Prostate gland (tissue), 2 donors: ENCODE measurements at regions of chr3 and their contacts with region 1.

Region 1: DNA sequence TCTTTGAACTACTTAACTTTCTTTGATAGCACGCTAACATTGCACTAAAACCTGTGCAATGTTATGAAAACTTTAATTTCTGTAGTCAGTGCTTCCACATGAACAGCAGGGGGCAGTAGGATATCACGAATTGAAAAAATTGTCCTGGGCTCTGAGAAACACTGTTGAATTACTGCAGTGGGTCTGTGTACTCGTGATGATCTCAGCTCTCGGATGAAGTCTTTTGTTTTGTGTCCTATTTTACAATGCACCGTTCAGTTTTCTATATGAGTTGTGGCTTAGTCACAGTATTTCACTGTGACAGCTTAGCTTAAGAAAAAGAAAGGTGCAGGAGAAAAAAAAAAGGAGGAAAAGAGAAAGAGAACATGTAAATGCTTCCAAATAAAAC is 141.3 kb upstream of the CCDC54 start:
- DNase-seq: peak; percentile 69
- H3K4me3 ChIP-seq: peak overlapping the region; percentile 29 to 34
- H3K27ac ChIP-seq: peak overlapping the region; percentile 3 to 59
- H3K4me1 ChIP-seq: no peaks in the 10 kb centered on the region
- H3K27me3 ChIP-seq: no peaks in the 10 kb centered on the region
- CTCF ChIP-seq: peak; percentile 76 to 97 (median 93)
- POLR2A ChIP-seq: no peak

Region 2: GRCh38 chr3:107429320-107430181 is 193.6 kb after region 1 on chr3:
- intact Hi-C with region 1: loop called (anchors 5 kb)
- DNase-seq: peak; percentile 69
- H3K4me3 ChIP-seq: peak overlapping the region; percentile 64 to 68
- H3K27ac ChIP-seq: peak overlapping the region; percentile 97 to 98
- H3K4me1 ChIP-seq: no peaks in the 10 kb centered on the region
- H3K27me3 ChIP-seq: no peaks in the 10 kb centered on the region
- CTCF ChIP-seq: peak; percentile 64 to 85 (median 82)
- POLR2A ChIP-seq: no peak

Region 3: GRCh38 chr3:107522510-107523288 is 286.8 kb after region 1 on chr3 and contains the start of gene BBX:
- intact Hi-C with region 1: loop called (anchors 5 kb)
- DNase-seq: peak; percentile 96
- H3K4me3 ChIP-seq: peak within 1 kb of the TSS; percentile 84 to 95
- H3K27ac ChIP-seq: peak within 1 kb of the TSS; percentile 96 to 98
- H3K4me1 ChIP-seq: peaks cover 5% of the 10 kb centered on the region
- H3K27me3 ChIP-seq: no peaks in the 10 kb centered on the region
- CTCF ChIP-seq: peak in 2 of 4 experiments; percentile 7 to 13
- POLR2A ChIP-seq: peak; percentile 95
- total RNA-seq, gene BBX: 94.7 to 226 TPM

Region 4: GRCh38 chr3:107562969-107563529 is 327.1 kb after region 1 on chr3:
- intact Hi-C with region 1: no loop called
- DNase-seq: no peak
- H3K4me3 ChIP-seq: no peak overlapping the region
- H3K27ac ChIP-seq: no peak overlapping the region
- H3K4me1 ChIP-seq: no peaks in the 10 kb centered on the region
- H3K27me3 ChIP-seq: no peaks in the 10 kb centered on the region
- CTCF ChIP-seq: no peak
- POLR2A ChIP-seq: no peak

Region 5: DNA sequence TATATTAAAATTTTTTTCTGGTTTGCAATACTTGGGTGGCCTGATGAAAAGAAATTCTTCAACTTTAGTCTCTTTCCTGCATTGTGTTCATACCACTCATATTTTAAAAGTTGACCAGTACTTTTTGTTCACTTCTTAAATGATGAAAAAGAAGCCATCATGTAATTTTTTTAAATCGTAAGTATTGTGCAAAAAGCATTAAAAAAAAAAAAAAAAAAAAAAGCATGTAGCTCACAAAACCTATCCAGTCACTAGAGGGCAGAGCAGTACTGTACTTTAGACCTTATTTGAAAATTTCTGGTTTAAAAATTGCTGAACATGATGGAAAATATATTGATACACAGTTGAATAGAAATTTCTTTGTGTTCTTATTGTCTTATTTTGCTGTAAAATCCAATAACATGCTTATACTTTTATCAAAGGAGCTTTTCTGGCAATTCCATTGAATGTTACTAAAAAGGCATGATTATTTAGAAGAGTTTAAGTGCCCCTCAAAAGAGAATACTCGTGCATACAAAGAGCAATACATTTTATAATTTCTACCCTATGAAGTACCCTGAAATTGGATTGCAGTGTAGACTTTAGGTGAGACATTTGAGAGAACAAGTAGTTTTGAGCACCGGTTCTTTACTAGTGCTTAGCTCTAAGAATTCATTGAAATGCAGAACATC is 424.5 kb after region 1 on chr3:
- intact Hi-C with region 1: loop called (anchors 10 kb)
- DNase-seq: no peak
- H3K4me3 ChIP-seq: no peak overlapping the region
- H3K27ac ChIP-seq: no peak overlapping the region
- H3K4me1 ChIP-seq: no peaks in the 10 kb centered on the region
- H3K27me3 ChIP-seq: no peaks in the 10 kb centered on the region
- CTCF ChIP-seq: peak in 3 of 4 experiments; percentile 28 to 53 (median 49)
- POLR2A ChIP-seq: no peak

Region 6: GRCh38 chr3:107740992-107741896 is 505.3 kb after region 1 on chr3:
- intact Hi-C with region 1: loop called (anchors 5 kb)
- DNase-seq: no peak
- H3K4me3 ChIP-seq: no peak overlapping the region
- H3K27ac ChIP-seq: no peak overlapping the region
- H3K4me1 ChIP-seq: no peaks in the 10 kb centered on the region
- H3K27me3 ChIP-seq: no peaks in the 10 kb centered on the region
- CTCF ChIP-seq: peak in 3 of 4 experiments; percentile 35 to 67 (median 65)
- POLR2A ChIP-seq: no peak

Region 7: DNA sequence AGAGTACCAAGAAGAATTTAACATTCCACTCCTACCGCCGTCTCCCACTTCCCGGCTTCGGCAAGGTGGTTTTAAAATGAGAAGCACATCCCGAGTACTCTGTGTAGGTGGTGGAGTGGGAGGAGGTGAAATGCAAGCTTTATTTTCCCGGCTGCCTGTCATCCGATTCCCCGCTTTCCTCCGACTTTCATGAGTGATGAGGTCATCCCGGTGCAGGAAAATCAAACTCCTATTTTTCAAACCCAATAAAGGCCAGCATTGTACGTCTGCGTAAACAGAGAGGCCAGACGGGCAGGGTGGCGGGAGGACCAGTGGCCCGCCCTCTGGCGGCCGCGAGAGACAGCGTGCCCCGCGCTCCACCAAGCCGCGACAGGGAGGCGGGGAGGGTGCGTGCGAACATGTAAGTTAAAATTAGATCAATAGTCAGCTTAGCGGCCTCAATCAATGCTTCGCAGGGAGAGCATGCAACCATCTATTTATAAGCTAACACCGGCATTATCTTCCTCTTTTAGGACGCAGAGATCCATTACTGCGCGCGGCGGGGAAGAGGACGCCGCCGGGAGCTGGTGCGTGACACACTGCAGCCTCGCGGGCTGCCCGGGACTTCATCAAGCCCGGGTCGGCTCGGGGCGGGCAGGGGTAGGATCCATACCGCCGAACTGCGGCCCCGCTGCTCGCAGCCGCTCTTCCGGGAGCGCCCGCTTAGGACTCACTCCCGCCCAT is 691.6 kb after region 1 on chr3:
- intact Hi-C with region 1: loop called (anchors 5 kb)
- DNase-seq: peak; percentile 49
- H3K4me3 ChIP-seq: peak overlapping the region; percentile 26 to 41
- H3K27ac ChIP-seq: no peak overlapping the region
- H3K4me1 ChIP-seq: no peaks in the 10 kb centered on the region
- H3K27me3 ChIP-seq: no peaks in the 10 kb centered on the region
- CTCF ChIP-seq: peak; percentile 83 to 87 (median 85)
- POLR2A ChIP-seq: no peak